ENCODE measurements at regions of chr22 and their contacts with region 1.

Region 1: GRCh38 chr22:48574776-48575565 is 1252.7 kb downstream of the BRD1 start:
- DNase-seq: peak; percentile 87
- H3K4me3 ChIP-seq: peak overlapping the region; percentile 61
- H3K27ac ChIP-seq: no peak overlapping the region
- H3K4me1 ChIP-seq: peaks cover 10% of the 10 kb centered on the region
- H3K27me3 ChIP-seq: no peaks in the 10 kb centered on the region
- CTCF ChIP-seq: peak; percentile 61

Region 2: DNA sequence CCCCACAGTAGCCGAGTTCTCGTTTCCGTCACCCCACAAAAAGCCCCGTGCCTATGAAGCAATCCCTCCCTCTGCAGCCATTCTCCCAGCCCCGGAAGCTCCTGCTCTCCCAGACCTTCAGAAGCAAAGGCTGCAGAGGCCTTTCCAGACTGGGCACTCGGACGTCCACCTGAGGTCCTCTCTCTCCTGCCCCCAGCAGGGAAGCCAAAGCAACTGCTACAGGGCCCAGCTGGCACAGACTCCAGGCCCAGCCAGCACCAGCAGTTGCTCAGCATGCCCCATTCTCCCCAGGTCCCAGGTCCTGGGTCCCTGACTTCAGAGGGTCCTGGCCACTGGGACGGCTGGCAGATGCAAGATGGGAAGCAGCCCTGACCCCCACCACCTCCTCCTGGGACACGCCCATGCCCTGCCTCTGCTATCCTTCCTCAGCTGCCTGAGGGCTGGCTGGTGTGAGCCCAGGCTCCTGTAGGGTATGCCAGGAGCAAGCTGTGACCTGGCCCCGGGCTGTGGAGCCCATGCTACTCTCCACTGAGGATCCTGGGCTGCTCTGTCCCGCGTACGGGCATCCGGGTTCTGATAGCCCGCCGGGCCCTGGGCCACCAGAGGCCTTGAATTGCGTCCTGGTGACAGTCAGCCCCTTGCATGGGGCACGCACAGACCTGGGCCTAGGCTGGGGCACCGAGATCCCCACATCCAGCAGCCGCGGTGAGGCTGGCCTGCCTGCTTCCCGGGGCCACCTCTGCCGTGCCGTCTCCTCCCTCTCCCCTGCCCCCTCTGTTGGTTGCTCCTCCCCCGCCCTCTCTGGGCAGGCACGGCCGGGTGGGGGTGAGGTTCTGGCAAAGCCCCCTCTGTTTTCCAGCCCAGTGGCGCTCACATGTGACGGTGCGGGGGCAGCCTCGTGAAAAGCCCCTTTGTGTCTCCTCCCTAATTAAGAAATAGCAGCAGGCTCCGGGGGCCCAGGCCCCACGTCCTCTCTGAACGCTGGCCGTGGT is 57.6 kb before region 1 on chr22:
- CTCF ChIA-PET with region 1: no interaction called
- POLR2A ChIA-PET with region 1: no interaction called
- intact Hi-C with region 1: no loop called
- DNase-seq: no peak
- H3K4me3 ChIP-seq: no peak overlapping the region
- H3K27ac ChIP-seq: no peak overlapping the region
- H3K4me1 ChIP-seq: peaks cover 13% of the 10 kb centered on the region
- H3K27me3 ChIP-seq: no peaks in the 10 kb centered on the region
- CTCF ChIP-seq: no peak

Region 3: GRCh38 chr22:48663297-48663696 is 88.3 kb after region 1 on chr22:
- CTCF ChIA-PET with region 1: no interaction called
- POLR2A ChIA-PET with region 1: no interaction called
- intact Hi-C with region 1: loop called (anchors 10 kb)
- DNase-seq: peak; percentile 46
- H3K4me3 ChIP-seq: no peak overlapping the region
- H3K27ac ChIP-seq: no peak overlapping the region
- H3K4me1 ChIP-seq: peaks cover 19% of the 10 kb centered on the region
- H3K27me3 ChIP-seq: no peaks in the 10 kb centered on the region
- CTCF ChIP-seq: peak; percentile 64